ENCODE measurements at regions of chr5 and their contacts with region 1.

Region 1: GRCh38 chr5:163505368-163506094 is at the start of gene MAT2B:
- DNase-seq: peak; percentile 94 to 96 (median 95)
- H3K4me3 ChIP-seq: peak within 1 kb of the TSS; percentile 50 to 95 (median 88)
- H3K27ac ChIP-seq: peak within 1 kb of the TSS; percentile 64 to 100 (median 98)
- H3K4me1 ChIP-seq: peaks cover 24 to 63% of the 10 kb centered on the region in 2 donors
- H3K27me3 ChIP-seq: no peaks in the 10 kb centered on the region
- CTCF ChIP-seq: peak; percentile 10 to 49 (median 26)
- POLR2A ChIP-seq: peak; percentile 85 to 98
- total RNA-seq, gene MAT2B: 43.5 to 83.7 (median 59.2) TPM

Region 2: DNA sequence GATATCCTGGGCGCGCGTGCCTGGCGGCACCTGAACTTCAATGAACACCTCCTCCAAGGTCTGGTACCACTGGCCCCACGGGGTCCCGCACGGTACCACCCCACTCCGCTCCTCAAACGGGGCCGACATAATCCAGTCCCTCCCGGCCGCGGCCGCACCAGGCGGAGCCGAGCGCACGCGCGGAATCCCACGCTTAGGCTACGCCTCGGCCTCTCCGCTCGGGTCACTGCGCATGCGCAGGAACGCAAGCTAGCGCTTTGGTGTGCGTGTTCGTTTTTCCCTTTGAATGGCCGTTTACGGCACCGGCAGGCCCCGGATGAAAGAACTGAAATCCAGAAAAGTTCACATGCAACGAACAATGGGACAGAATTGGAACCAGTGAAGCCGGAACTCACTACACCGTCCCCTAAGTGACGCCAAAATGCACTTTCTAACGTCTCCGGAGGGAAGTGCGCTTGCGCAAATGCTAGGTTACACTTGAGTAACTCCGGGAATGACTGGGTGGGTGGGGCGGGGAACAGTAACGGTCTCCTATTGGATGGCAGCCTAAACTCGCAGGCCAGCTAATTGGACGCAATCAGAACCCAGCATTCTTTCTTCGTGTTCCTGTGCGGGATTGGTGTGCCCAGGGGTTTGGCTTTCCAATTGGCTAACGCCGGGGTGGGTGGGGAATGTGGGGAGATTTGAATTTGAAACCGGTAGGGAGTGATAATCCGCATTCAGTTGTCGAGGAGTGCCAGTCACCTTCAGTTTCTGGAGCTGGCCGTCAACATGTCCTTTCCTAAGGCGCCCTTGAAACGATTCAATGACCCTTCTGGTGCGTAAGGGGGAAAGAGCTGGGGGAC is 45.4 kb before region 1 on chr5 and contains the starts of genes HMMR and NUDCD2:
- intact Hi-C with region 1: loop called in 1 of 2 experiments (anchors 5 kb)
- DNase-seq: peak; percentile 95 to 99 (median 97)
- H3K4me3 ChIP-seq: peak within 1 kb of the TSS; percentile 7 to 73 (median 50)
- H3K27ac ChIP-seq: peak within 1 kb of the TSS; percentile 89 to 98 (median 94)
- H3K4me1 ChIP-seq: peaks cover 16 to 38% of the 10 kb centered on the region in 2 donors
- H3K27me3 ChIP-seq: no peaks in the 10 kb centered on the region
- CTCF ChIP-seq: no peak
- POLR2A ChIP-seq: peak; percentile 67 to 85
- total RNA-seq, gene HMMR: 0.95 to 10.3 (median 1.6) TPM in 8 of 9 donors, not detected in the other
- total RNA-seq, gene NUDCD2: 4.0 to 28.1 (median 19.2) TPM